ENCODE measurements at regions of chr6 and their contacts with region 1.

Region 1: GRCh38 chr6:110398778-110399177 is 16.6 kb downstream of the DDO start:
- DNase-seq: no peak
- ATAC-seq: peak in 1 of 4 donors; percentile 38
- H3K4me3 ChIP-seq: no peak overlapping the region
- H3K27ac ChIP-seq: no peak overlapping the region
- H3K4me1 ChIP-seq: peaks cover 0 to 23% (median 7%) of the 10 kb centered on the region in 12 donors
- H3K27me3 ChIP-seq: no peaks in the 10 kb centered on the region
- CTCF ChIP-seq: no peak
- POLR2A ChIP-seq: no peak

Region 2: DNA sequence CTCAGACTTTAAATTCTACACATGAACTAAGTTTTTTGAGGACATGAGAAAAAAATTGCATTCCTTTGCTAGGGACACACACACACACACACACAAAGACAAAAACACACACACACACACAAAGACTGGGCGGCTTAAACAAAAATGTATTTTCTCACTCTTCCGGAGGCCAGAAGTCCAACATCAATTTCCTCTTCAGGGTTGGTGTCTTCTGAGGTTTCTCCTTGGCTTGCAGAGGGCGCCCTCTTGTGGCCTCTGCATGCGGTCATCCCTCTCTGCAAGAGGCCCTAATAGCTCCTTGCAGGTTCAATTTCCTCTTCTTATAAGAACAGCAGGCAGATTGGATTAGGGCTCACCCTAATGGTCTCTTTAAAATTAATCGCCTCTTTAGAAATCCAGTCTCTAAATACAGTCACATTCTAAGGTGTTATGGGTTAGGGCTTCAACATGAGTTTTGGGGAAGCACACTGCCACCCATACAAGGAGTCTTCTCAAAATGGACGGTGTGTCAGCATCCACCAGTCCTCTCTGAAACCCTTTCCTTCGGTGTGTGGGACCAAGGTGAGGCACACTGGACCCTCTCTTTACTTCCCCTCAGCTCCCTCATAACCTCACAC is 359.3 kb before region 1 on chr6:
- intact Hi-C with region 1: loop called in 4 of 10 experiments (anchors 5 to 10 kb)
- DNase-seq: peak; percentile 75 to 90 (median 82)
- ATAC-seq: peak; percentile 79 to 94 (median 91)
- H3K4me3 ChIP-seq: peak overlapping the region in 10 of 12 donors; percentile 11 to 47 (median 31)
- H3K27ac ChIP-seq: peak overlapping the region in 1 of 12 donors; percentile 59
- H3K4me1 ChIP-seq: peaks cover 0 to 11% (median 0%) of the 10 kb centered on the region in 12 donors
- H3K27me3 ChIP-seq: no peaks in the 10 kb centered on the region
- CTCF ChIP-seq: peak; percentile 81 to 95 (median 88)
- POLR2A ChIP-seq: no peak

Region 3: DNA sequence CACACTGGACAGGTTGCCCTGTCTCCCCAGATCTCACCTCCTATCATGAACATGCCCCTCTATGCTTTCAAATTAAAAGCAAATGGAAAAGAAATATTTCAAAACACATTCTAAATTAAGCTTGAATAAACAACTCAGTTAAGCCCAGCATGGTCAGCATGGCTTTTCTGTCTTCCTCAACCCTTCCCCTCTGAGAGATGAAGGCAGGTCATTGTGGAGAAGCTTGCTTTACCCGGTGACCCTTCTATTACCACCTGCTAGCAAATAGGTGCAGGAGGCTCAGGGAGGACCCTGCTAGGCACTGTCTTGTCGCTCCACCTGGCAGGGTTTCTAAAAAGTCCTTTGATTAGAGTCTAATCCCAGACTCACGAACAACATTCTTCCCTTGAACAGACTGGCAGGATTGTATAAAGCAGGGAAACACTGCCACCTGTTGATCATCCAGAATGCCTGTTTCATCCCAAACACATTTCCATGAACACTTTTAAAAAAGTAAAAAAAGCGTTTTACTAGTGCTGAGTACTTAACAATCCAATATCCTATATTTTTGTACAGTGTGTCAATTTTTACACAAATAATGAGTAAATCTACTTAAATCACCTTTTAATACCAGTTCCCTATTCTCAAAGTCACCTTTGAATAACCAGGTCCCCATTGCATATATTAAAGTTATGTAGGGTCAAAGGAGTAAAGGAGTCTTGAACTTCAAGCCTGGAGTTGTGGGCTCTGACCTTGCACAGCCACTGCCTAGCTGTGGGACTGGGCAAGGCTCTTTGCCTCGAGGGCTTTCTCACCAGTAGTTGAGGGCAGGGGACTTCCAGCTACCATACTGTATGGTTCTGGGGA is 345.2 kb before region 1 on chr6:
- intact Hi-C with region 1: loop called in 7 of 10 experiments (anchors 5 to 10 kb)
- DNase-seq: peak in 1 of 5 donors; percentile 19
- ATAC-seq: peak in 3 of 4 donors; percentile 44 to 72 (median 59)
- H3K4me3 ChIP-seq: no peak overlapping the region
- H3K27ac ChIP-seq: no peak overlapping the region
- H3K4me1 ChIP-seq: peaks cover 0 to 3% (median 0%) of the 10 kb centered on the region in 12 donors
- H3K27me3 ChIP-seq: peaks cover 0 to 4% (median 0%) of the 10 kb centered on the region in 9 donors
- CTCF ChIP-seq: peak; percentile 47 to 82 (median 71)
- POLR2A ChIP-seq: no peak